Left cardiac atrium (tissue), 4 donors: ENCODE measurements at regions of chr18 and their contacts with region 1.

Region 1: DNA sequence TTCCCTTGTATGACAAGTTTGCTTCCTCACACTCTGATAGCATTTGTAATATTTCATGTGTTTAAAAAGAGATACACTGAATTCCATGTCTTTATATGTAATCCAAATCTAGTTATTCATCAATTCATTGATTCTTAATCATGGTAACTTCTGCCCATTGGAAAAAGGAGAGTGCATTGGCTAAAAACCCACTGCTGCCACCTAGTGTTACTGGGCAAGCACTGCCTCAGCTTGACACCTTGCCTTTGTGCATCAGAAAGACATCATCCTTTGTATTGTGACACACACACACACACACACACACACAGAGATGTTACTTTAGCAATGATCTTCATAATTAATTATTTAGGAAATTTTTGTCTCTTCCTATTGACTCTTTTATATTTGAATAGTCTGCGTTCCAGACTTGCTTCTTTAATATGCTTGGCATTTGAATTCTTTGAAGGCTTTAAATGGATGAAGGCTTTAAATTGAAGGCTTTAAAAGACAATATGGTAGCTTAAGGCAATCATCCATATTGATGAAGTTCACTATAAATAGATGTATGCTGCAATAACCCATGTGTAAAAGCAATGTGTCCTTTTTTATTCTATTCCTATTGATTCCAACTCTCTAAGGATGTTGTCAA is 414.2 kb upstream of the CHST9 start:
- DNase-seq: no peak
- ATAC-seq: peak in 1 of 2 donors; percentile 31

Region 2: DNA sequence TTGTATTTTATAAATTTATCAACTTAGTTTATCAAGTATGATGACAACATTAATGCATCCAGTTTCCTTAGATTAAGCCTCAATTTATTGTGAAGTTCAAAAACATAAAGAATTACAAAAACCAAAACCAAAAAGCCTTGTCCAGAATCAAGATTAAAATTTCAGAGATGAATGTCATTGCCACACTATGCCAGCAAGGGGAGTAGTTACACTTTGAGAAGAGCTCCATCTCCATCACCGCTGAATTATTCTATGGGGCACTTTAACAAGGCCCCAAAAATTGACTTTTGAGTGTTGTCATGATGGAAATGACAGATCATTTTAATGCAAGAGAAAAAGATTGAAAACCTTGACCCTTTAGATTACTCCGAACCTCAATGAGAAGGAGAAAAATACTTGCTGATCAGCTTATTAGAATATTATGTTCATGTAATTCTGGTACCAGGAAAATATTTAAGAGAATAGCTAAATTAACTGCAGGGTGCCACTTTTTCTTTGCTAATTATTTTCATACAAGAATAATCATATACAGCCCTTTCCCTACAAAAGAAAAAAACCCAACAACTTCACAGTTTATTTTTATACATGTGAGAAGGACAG is 581.3 kb before region 1 on chr18:
- intact Hi-C with region 1: loop called in 1 of 2 experiments (anchors 5 kb)
- DNase-seq: no peak
- ATAC-seq: no peak

Region 3: DNA sequence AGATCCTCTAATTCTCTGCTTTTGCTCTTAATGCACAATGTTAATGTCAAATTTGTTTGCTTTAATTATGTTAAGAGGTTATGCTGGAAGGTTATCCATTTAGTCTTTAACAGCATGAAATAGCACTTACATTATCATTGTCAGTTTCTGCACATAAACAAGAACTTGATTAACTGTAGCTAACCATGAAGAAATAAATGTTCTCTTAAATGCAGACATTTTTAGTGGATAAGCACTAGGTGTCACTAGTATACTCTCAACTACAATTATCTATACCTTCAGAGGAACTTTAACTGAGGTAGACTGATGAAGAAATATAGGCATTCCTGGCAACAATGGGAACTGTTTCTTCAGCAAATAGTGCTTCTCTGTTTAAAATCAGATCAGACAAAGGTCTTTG is 235.4 kb before region 1 on chr18:
- intact Hi-C with region 1: loop called (anchors 2 to 10 kb)
- DNase-seq: no peak
- ATAC-seq: no peak

Region 4: GRCh38 chr18:27520401-27520800 is 78.9 kb before region 1 on chr18:
- intact Hi-C with region 1: no loop called
- DNase-seq: no peak
- ATAC-seq: no peak

Region 5: GRCh38 chr18:27685807-27686412 is 86.6 kb after region 1 on chr18:
- intact Hi-C with region 1: no loop called
- DNase-seq: no peak
- ATAC-seq: no peak